ENCODE measurements at regions of chr4 and their contacts with region 1.

Region 1: DNA sequence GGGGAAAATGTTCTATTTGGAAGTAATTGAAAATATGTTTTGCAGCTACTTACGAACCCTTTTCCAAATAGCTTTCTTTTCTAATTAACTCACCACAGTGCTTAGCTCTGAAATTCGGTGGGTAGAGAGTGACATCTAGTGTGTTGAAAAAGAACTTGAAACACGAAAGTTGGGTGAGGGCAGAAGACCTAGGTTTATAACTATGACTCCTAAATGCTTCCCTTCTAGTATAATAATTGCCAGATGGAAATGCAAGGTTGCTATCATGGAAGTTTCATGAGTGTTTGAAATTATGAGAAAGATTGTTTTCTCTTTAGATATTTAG is 77.3 kb upstream of the NOCT start:
- DNase-seq: peak; percentile 11 to 56
- ATAC-seq: peak; percentile 91 to 93
- H3K4me3 ChIP-seq: no peak overlapping the region
- H3K27ac ChIP-seq: no peak overlapping the region
- H3K4me1 ChIP-seq: no peaks in the 10 kb centered on the region
- CTCF ChIP-seq: peak; percentile 59
- EP300 ChIP-seq: no peak
- POLR2A ChIP-seq: no peak
- RAD21 ChIP-seq: peak; percentile 65 to 72

Region 2: GRCh38 chr4:138927072-138927471 is 11.3 kb before region 1 on chr4:
- CTCF ChIA-PET with region 1: interaction called, 11 read pairs
- POLR2A ChIA-PET with region 1: no interaction called
- DNase-seq: no peak
- ATAC-seq: no peak
- H3K4me3 ChIP-seq: no peak overlapping the region
- H3K27ac ChIP-seq: no peak overlapping the region
- H3K4me1 ChIP-seq: no peaks in the 10 kb centered on the region
- CTCF ChIP-seq: no peak
- EP300 ChIP-seq: no peak
- POLR2A ChIP-seq: no peak
- RAD21 ChIP-seq: no peak

Region 3: DNA sequence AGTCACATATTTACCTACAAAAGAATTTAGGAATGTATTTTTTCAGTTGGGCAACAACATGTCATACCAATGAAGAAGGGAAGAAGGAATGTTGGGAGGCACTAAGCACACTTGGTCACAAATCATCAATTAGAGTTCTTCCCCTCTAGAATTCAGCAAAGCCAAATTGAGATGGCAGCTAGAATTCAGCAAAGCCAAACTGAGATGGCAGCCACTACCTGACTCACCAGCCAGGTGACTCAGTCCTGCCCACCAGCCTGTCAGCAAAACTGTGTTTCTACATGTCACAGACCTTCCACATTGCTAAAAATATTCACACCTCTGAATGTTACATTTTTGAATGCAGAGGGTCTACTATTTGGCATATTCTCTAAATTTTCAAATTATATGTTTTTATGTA is 14.1 kb after region 1 on chr4:
- CTCF ChIA-PET with region 1: interaction called, 11 read pairs
- POLR2A ChIA-PET with region 1: no interaction called
- DNase-seq: no peak
- ATAC-seq: no peak
- H3K4me3 ChIP-seq: no peak overlapping the region
- H3K27ac ChIP-seq: no peak overlapping the region
- H3K4me1 ChIP-seq: no peaks in the 10 kb centered on the region
- CTCF ChIP-seq: no peak
- EP300 ChIP-seq: no peak
- POLR2A ChIP-seq: no peak
- RAD21 ChIP-seq: no peak

Region 4: DNA sequence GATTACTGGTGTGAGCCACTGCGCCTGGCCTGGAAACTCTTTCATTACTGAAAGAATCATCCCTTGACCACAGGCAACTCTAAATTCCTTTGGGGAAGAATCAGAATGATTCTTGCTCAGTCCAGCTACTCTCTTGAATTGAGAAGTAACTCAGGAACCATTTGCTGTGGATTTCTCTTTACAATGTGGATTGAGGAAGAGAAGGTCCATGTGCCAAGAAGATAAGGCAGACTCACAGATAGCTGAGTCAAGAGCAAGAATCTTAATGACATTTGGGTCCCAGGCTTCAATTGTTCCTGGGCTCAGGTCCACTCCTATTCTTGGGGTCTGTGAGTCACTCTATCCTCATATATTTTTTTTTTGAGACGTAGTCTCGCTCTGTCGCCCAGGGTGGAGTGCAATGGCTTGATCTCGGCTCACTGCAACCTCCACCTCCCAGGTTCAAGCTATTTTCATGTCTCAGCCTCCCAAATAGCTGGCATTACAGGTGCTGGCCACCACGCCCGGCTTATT is 347.9 kb after region 1 on chr4:
- CTCF ChIA-PET with region 1: no interaction called
- POLR2A ChIA-PET with region 1: no interaction called
- DNase-seq: no peak
- ATAC-seq: no peak
- H3K4me3 ChIP-seq: no peak overlapping the region
- H3K27ac ChIP-seq: no peak overlapping the region
- H3K4me1 ChIP-seq: no peaks in the 10 kb centered on the region
- CTCF ChIP-seq: no peak
- EP300 ChIP-seq: no peak
- POLR2A ChIP-seq: no peak
- RAD21 ChIP-seq: no peak

Measured in A549 (cell line).